Activated naive CD4-positive, alpha-beta T cell treated with anti-CD3 and anti-CD28 coated beads for 36 hours (primary cell): ENCODE measurements at regions of chr5 and their contacts with region 1.

Region 1: GRCh38 chr5:159178978-159179377 is 30.4 kb downstream of the RNF145 start:
- DNase-seq: peak; percentile 63
- H3K4me3 Mint-ChIP-seq: no peak overlapping the region
- H3K27ac Mint-ChIP-seq: peak overlapping the region; percentile 96
- H3K4me1 Mint-ChIP-seq: peaks cover 78% of the 10 kb centered on the region
- H3K27me3 Mint-ChIP-seq: no peaks in the 10 kb centered on the region

Region 2: DNA sequence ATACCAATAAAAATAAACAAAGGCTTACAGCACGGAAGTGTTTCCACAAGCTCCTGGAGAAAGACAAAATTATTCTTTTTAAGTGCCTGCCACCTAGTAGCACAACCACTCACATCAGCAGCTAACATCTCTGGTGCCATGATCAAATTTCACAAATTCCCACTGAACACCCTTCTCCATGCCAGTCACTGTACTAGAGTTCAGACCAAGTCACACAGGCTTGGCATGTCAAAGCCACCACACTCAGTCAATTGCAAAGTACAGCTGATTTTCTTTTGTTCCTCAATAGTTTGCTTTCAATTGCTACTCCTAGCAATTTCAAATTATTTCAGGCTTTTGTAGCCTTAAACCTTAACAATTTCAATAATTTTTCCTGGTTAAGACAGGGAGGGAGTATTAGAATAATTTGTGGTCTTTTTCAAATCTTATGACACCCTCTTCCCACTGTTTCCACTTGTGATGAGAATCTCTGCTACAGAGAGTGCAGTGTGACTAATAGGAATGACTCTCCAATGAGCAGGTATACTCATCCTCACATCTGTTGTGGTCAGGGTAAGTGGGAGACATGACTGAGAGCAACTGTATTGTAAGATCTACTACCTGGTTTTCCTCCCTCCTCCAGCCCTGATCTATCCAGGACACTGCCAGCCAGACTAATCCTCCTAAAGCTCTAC is 15.8 kb before region 1 on chr5:
- CTCF ChIA-PET with region 1: no interaction called
- intact Hi-C with region 1: loop called (anchors 1 kb)
- DNase-seq: peak; percentile 41
- H3K4me3 Mint-ChIP-seq: no peak overlapping the region
- H3K27ac Mint-ChIP-seq: peak overlapping the region; percentile 32
- H3K4me1 Mint-ChIP-seq: peaks cover 47% of the 10 kb centered on the region
- H3K27me3 Mint-ChIP-seq: no peaks in the 10 kb centered on the region

Region 3: DNA sequence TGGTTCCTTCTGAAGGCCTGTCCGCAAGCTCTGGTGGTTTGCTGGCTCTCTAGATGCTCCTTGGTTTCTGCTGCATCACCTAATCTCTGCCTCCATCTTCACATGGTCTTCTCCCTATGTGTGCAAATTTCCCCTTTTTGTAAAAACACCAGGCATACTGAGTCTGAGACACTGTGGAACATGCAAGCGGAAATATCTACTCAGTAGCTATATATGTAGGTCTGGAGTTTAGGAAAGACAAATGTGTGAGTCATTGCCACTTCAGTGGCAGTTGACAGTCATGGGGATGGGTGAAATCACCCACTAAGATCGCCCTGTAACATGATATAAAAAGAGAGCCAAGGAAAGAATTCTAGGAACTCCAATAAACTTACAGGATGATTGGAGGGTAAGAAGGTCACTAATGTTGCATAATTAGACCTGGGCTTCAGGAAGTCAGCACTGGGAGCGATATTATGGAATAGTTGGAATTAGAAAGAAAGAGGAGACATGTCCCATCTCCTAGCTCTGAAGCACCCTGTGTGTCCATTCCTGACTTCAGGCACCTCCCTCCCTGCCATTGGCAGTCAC is 61.4 kb after region 1 on chr5:
- CTCF ChIA-PET with region 1: no interaction called
- intact Hi-C with region 1: loop called (anchors 1 kb)
- DNase-seq: peak; percentile 24
- H3K4me3 Mint-ChIP-seq: no peak overlapping the region
- H3K27ac Mint-ChIP-seq: peak overlapping the region; percentile 55
- H3K4me1 Mint-ChIP-seq: peaks cover 44% of the 10 kb centered on the region
- H3K27me3 Mint-ChIP-seq: no peaks in the 10 kb centered on the region

Region 4: DNA sequence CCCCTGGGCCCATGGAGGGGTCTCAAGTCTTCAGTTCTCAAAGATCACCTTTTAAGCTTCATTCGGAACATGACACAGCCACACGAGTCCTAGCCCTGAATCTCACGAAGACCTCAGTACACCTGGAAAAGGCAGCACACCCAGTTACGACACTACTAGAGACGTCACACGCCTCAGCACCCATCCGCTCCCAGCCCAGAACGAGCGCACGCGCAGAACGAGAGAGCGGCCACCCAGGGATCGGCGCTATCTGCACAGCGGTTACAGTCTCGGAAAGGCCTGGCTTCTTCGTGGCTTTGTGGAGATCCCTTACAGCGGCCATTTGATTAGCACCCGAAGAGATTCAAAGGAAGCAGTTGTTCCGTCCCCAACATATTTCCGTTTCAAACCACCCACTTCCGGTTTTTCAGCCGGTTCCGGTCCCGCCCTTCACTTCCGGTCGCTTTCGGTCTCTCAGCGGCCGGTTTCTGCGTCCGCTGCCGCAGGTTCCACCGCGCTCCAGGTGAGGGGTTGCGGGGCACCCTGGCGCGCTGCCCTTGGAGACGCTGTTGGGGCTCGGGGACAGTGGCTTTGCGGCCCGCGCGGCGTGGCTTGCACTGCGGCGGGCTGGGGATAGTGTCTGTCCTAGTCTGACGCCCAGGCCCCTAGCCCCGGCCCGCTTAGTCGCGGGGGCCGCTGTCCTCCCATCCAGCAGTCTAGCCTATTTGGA is 84.0 kb after region 1 on chr5 and contains the start of gene UBLCP1:
- CTCF ChIA-PET with region 1: no interaction called
- intact Hi-C with region 1: loop called (anchors 1 kb)
- DNase-seq: peak; percentile 82
- H3K4me3 Mint-ChIP-seq: peak within 1 kb of the TSS; percentile 96
- H3K27ac Mint-ChIP-seq: peak within 1 kb of the TSS; percentile 99
- H3K4me1 Mint-ChIP-seq: peaks cover 29% of the 10 kb centered on the region
- H3K27me3 Mint-ChIP-seq: no peaks in the 10 kb centered on the region
- total RNA-seq, gene UBLCP1: 22.7 to 23.0 TPM

Region 5: GRCh38 chr5:159773062-159773924 is 594.3 kb after region 1 on chr5:
- CTCF ChIA-PET with region 1: no interaction called
- intact Hi-C with region 1: loop called (anchors 10 kb)
- DNase-seq: peak; percentile 86
- H3K4me3 Mint-ChIP-seq: peak overlapping the region; percentile 41
- H3K27ac Mint-ChIP-seq: no peak overlapping the region
- H3K4me1 Mint-ChIP-seq: peaks cover 8% of the 10 kb centered on the region
- H3K27me3 Mint-ChIP-seq: peaks cover 32% of the 10 kb centered on the region